GM12878 (cell line): ENCODE measurements at regions of chr13 and their contacts with region 1.

Region 1: DNA sequence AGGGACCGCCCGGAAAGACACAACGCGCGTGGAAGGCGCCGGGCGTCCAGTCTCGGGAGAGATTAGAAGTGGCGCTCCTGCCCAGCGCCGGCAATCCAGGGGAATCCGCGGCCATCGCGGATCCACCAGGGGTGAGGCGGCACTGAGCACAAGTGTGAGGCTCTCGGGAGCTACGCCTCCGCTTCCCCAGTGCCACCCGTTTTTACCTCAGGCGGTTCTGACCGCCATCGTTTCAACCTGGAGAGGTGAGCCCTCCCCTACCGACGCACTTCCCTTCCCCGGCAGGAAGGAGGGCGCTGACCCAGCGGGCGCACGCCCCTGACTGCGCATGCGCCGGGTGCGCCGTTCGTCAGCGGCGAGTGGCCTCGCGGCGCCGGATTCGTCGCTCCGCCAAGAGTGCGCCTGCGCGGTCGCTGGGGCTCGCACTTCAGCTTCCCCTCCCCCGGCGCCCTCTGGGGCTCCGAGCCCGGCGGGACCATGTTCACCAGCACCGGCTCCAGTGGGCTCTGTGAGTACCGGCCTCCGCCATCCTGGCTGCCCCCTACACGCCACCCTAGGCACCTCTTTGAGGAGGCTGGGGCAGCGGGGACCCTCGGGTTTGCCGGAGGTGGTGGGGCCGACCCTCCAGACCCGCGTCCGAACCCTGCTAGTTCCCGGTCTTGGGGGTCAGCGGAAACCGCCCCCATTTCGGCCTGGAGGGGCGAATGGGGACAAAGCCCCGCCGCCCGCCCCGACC is at the start of gene UBAC2:
- DNase-seq: peak; percentile 89
- ATAC-seq: peak; percentile 86
- H3K4me3 ChIP-seq: peak within 1 kb of the TSS; percentile 94
- H3K27ac ChIP-seq: peak within 1 kb of the TSS; percentile 84
- H3K4me1 ChIP-seq: peaks cover 29% of the 10 kb centered on the region
- H3K27me3 ChIP-seq: no peaks in the 10 kb centered on the region
- CTCF ChIP-seq: 0 out of 6 replicates have a peak, but pooled peaks of 1 of the 3 experiments have one; percentile 2
- EP300 ChIP-seq: 0 out of 4 replicates have a peak, but pooled peaks of 1 of the 2 experiments have one; percentile 7
- POLR2A ChIP-seq: peak; percentile 100
- RAD21 ChIP-seq: no peak
- polyA plus RNA-seq, gene UBAC2: 3.0 to 4.1 TPM

Region 2: DNA sequence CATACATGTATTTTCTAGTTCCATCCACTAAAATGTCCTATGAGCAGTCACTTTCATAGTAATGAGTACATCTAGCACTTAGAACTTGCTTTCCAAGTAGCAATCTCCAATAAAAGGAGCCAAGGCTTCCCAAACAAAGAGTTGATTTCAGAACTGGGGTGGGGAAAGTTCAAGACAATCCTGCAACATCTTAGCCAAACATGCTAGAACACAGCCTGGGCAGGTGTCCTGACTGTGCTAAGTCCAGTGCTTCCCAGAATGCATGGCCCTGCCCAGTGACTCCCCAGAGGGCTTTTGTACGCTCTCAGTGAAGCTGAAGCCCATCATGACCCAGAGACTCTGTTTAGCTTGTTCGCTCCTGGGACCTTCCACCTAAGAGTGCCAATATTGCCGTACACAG is 106.6 kb before region 1 on chr13:
- CTCF ChIA-PET with region 1: no interaction called
- POLR2A ChIA-PET with region 1: no interaction called
- RAD21 ChIA-PET with region 1: no interaction called
- SMC1A ChIA-PET with region 1: no interaction called
- in situ Hi-C with region 1: no loop called
- intact Hi-C with region 1: no loop called
- DNase-seq: no peak
- ATAC-seq: no peak
- H3K4me3 ChIP-seq: no peak overlapping the region
- H3K27ac ChIP-seq: no peak overlapping the region
- H3K4me1 ChIP-seq: no peaks in the 10 kb centered on the region
- H3K27me3 ChIP-seq: no peaks in the 10 kb centered on the region
- CTCF ChIP-seq: no peak
- EP300 ChIP-seq: no peak
- POLR2A ChIP-seq: no peak
- RAD21 ChIP-seq: no peak

Region 3: DNA sequence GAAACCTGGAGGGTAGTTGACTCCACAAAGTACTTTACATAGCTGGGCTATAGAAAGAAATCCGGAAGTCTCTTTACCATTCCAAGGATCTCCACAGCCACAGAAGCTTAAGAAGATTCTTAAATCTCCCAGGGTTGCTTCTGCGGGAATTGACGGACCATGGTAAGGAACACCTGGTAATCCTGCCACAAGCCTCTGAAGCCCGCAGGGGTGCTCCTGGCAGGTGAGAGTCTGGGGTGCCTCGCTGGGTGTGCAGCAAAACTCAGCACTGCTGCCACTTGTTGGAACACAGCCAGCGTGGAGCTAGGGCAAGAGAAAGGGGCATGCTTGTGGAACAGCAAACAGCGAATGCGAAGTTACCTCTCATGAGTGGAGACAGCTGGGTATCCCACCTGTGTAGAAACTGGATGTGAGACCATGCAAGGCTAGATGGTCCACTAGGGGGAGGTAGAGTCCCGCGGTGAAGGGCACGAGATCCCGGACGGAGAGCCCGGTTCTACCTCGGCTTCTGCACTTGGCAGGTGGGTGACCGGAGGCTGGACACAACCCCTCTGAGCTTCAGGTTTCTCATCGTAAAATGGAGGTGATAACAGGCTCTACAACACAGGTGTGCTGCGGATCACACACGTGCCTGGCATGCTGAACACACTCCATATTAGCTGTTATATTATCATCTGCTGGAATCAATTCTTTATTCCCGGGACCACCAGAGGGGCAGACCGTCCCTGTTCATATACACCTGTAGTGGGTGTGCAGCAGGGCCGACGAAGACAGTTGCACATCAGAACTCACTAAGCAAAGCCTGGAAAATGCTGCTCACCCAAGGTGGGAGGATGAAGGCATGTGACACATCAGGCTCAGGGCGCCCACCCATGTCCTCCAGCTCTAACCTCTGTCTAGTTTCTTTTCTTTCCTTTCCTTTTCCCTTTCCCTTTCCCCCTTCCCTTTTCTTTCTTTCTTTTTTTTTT is 24.0 kb before region 1 on chr13:
- CTCF ChIA-PET with region 1: interaction called, 11 read pairs
- POLR2A ChIA-PET with region 1: no interaction called
- RAD21 ChIA-PET with region 1: interaction called, 15 read pairs
- SMC1A ChIA-PET with region 1: interaction called, 5 read pairs
- in situ Hi-C with region 1: no loop called
- intact Hi-C with region 1: no loop called
- DNase-seq: no peak
- ATAC-seq: peak; percentile 96
- H3K4me3 ChIP-seq: no peak overlapping the region
- H3K27ac ChIP-seq: no peak overlapping the region
- H3K4me1 ChIP-seq: peaks cover 4% of the 10 kb centered on the region
- H3K27me3 ChIP-seq: peaks cover 0 to 2% of the 10 kb centered on the region in 2 experiments; a peak in 1 of 4 replicates
- CTCF ChIP-seq: peak; percentile 84 to 96 (median 93)
- EP300 ChIP-seq: no peak
- POLR2A ChIP-seq: no peak
- RAD21 ChIP-seq: peak; percentile 99

Region 4: GRCh38 chr13:99218969-99219368 is 18.4 kb after region 1 on chr13:
- CTCF ChIA-PET with region 1: interaction called, 11 read pairs
- POLR2A ChIA-PET with region 1: interaction called, 4 read pairs
- RAD21 ChIA-PET with region 1: interaction called, 17 read pairs
- SMC1A ChIA-PET with region 1: interaction called, 34 read pairs
- in situ Hi-C with region 1: no loop called
- intact Hi-C with region 1: no loop called
- DNase-seq: peak; percentile 62
- ATAC-seq: peak; percentile 67
- H3K4me3 ChIP-seq: no peak overlapping the region
- H3K27ac ChIP-seq: no peak overlapping the region
- H3K4me1 ChIP-seq: peaks cover 10% of the 10 kb centered on the region
- H3K27me3 ChIP-seq: no peaks in the 10 kb centered on the region
- CTCF ChIP-seq: no peak
- EP300 ChIP-seq: no peak
- POLR2A ChIP-seq: no peak
- RAD21 ChIP-seq: no peak

Region 5: GRCh38 chr13:99228737-99229691 is 28.4 kb after region 1 on chr13:
- CTCF ChIA-PET with region 1: interaction called, 22 read pairs
- POLR2A ChIA-PET with region 1: interaction called, 6 read pairs
- RAD21 ChIA-PET with region 1: interaction called, 6 read pairs
- SMC1A ChIA-PET with region 1: interaction called, 69 read pairs
- in situ Hi-C with region 1: no loop called
- intact Hi-C with region 1: loop called (anchors 2 kb)
- DNase-seq: peak; percentile 91
- ATAC-seq: peak; percentile 90
- H3K4me3 ChIP-seq: peak overlapping the region; percentile 42; the same call in 1 of the 2 replicates
- H3K27ac ChIP-seq: peak overlapping the region; percentile 87
- H3K4me1 ChIP-seq: peaks cover 49% of the 10 kb centered on the region
- H3K27me3 ChIP-seq: no peaks in the 10 kb centered on the region
- CTCF ChIP-seq: no peak
- EP300 ChIP-seq: peak; percentile 93 to 96
- POLR2A ChIP-seq: no peak
- RAD21 ChIP-seq: 0 out of 2 replicates have a peak, but pooled peaks have one; percentile 23

Region 6: GRCh38 chr13:99258210-99258860 is 57.7 kb after region 1 on chr13 and contains the start of gene GPR18:
- CTCF ChIA-PET with region 1: interaction called, 172 read pairs
- POLR2A ChIA-PET with region 1: interaction called, 12 read pairs
- RAD21 ChIA-PET with region 1: interaction called, 14 read pairs
- SMC1A ChIA-PET with region 1: interaction called, 58 read pairs
- in situ Hi-C with region 1: no loop called
- intact Hi-C with region 1: loop called (anchors 1 kb)
- DNase-seq: peak; percentile 67
- ATAC-seq: peak; percentile 89
- H3K4me3 ChIP-seq: peak within 1 kb of the TSS; percentile 64
- H3K27ac ChIP-seq: peak within 1 kb of the TSS; percentile 38
- H3K4me1 ChIP-seq: peaks cover 21% of the 10 kb centered on the region
- H3K27me3 ChIP-seq: no peaks in the 10 kb centered on the region
- CTCF ChIP-seq: no peak
- EP300 ChIP-seq: peak in 1 of 2 experiments; percentile 58; a peak in 1 of 4 replicates
- POLR2A ChIP-seq: no peak
- RAD21 ChIP-seq: peak; percentile 22; the same call in 1 of the 2 replicates
- polyA plus RNA-seq, gene GPR18: 3.9 to 8.4 TPM